Endothelial cell of umbilical vein (primary cell): ENCODE measurements at regions of chr20 and their contacts with region 1.

Region 1: GRCh38 chr20:16821211-16822089 is 73.3 kb downstream of the OTOR start:
- DNase-seq: peak; percentile 39
- H3K4me3 ChIP-seq: no peak overlapping the region
- H3K27ac ChIP-seq: no peak overlapping the region
- H3K4me1 ChIP-seq: no peaks in the 10 kb centered on the region
- H3K27me3 ChIP-seq: no peaks in the 10 kb centered on the region
- CTCF ChIP-seq: peak; percentile 90 to 92
- POLR2A ChIP-seq: no peak

Region 2: DNA sequence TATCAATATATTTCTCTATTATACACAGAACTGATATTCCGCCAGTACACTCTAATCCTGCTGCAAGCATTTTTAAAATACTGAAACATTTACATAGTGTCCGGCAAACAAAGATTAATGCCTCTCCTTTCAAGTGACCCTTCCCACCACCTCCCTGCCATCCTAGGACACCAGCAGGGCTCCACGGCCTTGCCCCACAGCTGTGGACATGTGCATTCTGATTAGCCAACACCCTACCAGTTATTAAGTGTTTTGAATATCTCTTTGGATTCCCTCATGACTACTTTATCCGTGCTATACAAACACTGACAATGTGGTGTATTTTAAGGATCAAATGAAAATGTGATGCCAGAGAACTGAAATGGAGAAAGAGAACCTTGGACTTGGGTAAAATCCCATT is 863.3 kb before region 1 on chr20:
- CTCF ChIA-PET with region 1: no interaction called
- POLR2A ChIA-PET with region 1: no interaction called
- dilution Hi-C with region 1: no loop called
- intact Hi-C with region 1: no loop called
- DNase-seq: no peak
- H3K4me3 ChIP-seq: no peak overlapping the region
- H3K27ac ChIP-seq: no peak overlapping the region
- H3K4me1 ChIP-seq: no peaks in the 10 kb centered on the region
- H3K27me3 ChIP-seq: no peaks in the 10 kb centered on the region
- CTCF ChIP-seq: no peak
- POLR2A ChIP-seq: no peak

Region 3: DNA sequence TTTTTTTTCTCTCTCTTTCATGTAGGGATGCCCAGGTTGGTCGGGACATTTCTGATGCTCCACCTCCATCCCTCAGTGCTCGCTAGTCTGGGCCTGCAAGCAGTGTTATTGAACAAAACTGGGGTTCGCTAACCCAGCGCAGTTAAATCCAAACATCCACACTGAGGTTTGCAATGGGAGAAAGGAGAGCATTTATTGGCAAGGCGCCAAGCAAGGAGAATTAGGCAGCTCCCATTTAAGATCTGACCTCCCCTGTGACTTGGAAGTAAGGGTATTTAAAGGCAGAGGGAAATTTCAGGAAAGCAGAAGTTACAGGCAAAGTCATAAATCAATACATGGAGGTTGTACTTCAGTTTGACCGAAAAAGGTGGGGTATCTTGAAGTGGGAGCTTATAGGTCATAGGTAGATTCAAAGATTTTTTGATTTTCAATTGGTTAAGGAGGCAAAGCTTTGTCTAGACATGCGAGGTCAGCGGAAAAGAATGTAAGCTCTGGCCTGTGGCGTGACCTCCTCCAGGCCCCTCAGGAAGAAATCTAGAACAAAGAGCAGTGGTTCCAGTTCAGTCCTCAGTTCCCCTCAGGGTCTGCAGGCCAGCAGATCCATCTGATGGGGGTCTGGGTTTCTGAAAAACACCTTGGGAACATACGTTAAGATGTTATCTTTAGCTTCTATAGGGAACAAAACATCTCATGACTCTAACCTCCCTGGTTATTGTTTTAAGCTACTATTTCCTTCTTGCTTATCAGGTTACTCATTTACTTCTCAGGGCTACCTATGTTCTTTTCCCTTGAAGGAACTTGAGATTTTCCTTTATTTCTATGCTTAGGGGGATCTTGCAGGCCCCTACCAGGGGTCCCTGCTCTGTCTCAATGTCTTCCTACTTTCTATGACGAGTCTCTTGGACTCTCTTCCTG is 182.2 kb before region 1 on chr20:
- CTCF ChIA-PET with region 1: no interaction called
- POLR2A ChIA-PET with region 1: no interaction called
- dilution Hi-C with region 1: no loop called
- intact Hi-C with region 1: no loop called
- DNase-seq: no peak
- H3K4me3 ChIP-seq: no peak overlapping the region
- H3K27ac ChIP-seq: no peak overlapping the region
- H3K4me1 ChIP-seq: no peaks in the 10 kb centered on the region
- H3K27me3 ChIP-seq: no peaks in the 10 kb centered on the region
- CTCF ChIP-seq: no peak
- POLR2A ChIP-seq: no peak

Region 4: GRCh38 chr20:16714751-16715150 is 106.7 kb before region 1 on chr20:
- CTCF ChIA-PET with region 1: no interaction called
- POLR2A ChIA-PET with region 1: no interaction called
- dilution Hi-C with region 1: no loop called
- intact Hi-C with region 1: no loop called
- DNase-seq: no peak
- H3K4me3 ChIP-seq: no peak overlapping the region
- H3K27ac ChIP-seq: no peak overlapping the region
- H3K4me1 ChIP-seq: no peaks in the 10 kb centered on the region
- H3K27me3 ChIP-seq: peaks cover 0 to 1% of the 10 kb centered on the region in 2 experiments
- CTCF ChIP-seq: no peak
- POLR2A ChIP-seq: no peak

Region 5: GRCh38 chr20:16801919-16802911 is 19.2 kb before region 1 on chr20:
- CTCF ChIA-PET with region 1: interaction called, 337 read pairs
- POLR2A ChIA-PET with region 1: no interaction called
- dilution Hi-C with region 1: no loop called
- intact Hi-C with region 1: loop called (anchors 1 kb)
- DNase-seq: peak; percentile 61
- H3K4me3 ChIP-seq: no peak overlapping the region
- H3K27ac ChIP-seq: no peak overlapping the region
- H3K4me1 ChIP-seq: no peaks in the 10 kb centered on the region
- H3K27me3 ChIP-seq: peaks cover 3 to 9% of the 10 kb centered on the region in 2 experiments
- CTCF ChIP-seq: peak; percentile 68 to 76
- POLR2A ChIP-seq: no peak

Region 6: GRCh38 chr20:16810216-16810615 is 11.2 kb before region 1 on chr20:
- CTCF ChIA-PET with region 1: interaction called, 337 read pairs
- POLR2A ChIA-PET with region 1: no interaction called
- dilution Hi-C with region 1: no loop called
- intact Hi-C with region 1: no loop called
- DNase-seq: no peak
- H3K4me3 ChIP-seq: no peak overlapping the region
- H3K27ac ChIP-seq: no peak overlapping the region
- H3K4me1 ChIP-seq: no peaks in the 10 kb centered on the region
- H3K27me3 ChIP-seq: peaks cover 2 to 3% of the 10 kb centered on the region in 2 experiments
- CTCF ChIP-seq: no peak
- POLR2A ChIP-seq: no peak